ENCODE measurements at regions of chr1 and their contacts with region 1.

Region 1: DNA sequence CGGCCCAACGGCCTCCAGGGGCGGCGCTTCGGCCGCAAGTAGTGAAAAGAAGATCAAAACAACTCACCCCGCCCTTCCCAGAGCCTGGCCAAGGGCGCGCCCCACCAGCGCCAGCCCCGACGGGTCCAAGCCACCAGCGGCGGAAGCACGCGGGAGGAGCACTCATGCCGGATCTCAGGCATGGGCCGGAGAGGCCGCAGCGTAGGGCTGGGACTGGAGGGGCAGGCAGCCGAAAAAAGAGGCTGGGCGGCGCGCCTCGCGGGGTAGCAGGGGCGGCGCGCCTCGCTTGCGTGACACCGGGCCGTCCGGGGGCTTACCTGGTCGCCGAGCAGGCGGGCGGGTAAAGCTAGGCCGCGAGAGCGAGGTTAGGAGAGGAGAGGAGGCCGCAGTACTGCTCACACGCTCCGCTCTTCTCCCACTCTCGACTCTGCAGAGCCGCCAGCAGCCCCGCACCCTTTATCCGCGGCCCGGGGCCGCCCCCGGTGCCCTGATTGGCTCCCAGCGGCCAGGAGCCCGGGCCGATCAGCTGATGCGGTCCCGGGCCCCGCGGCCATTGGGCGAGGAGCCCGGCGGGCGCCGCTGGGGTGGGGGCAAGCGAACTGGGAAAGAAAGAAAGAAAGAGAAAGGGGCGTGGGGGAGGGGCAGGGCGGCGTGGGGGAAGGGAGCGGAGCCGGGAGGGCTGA is at the start of gene GLUL:
- DNase-seq: peak; percentile 82 to 85 (median 83)
- H3K4me3 ChIP-seq: peak within 1 kb of the TSS; percentile 75 to 97 (median 96)
- H3K4me3 Mint-ChIP-seq: peak within 1 kb of the TSS; percentile 100
- H3K27ac ChIP-seq: peak within 1 kb of the TSS; percentile 77 to 79
- H3K27ac Mint-ChIP-seq: peak within 1 kb of the TSS; percentile 91 to 98 (median 95)
- H3K4me1 ChIP-seq: peaks cover 48 to 57% of the 10 kb centered on the region in 2 donors
- H3K4me1 Mint-ChIP-seq: peaks cover 70% of the 10 kb centered on the region
- H3K27me3 ChIP-seq: no peaks in the 10 kb centered on the region
- H3K27me3 Mint-ChIP-seq: peaks cover 0 to 3% (median 0%) of the 10 kb centered on the region in 3 donors
- CTCF ChIP-seq: no peak
- polyA plus RNA-seq, gene GLUL: 506 to 1,423 (median 523) TPM

Region 2: DNA sequence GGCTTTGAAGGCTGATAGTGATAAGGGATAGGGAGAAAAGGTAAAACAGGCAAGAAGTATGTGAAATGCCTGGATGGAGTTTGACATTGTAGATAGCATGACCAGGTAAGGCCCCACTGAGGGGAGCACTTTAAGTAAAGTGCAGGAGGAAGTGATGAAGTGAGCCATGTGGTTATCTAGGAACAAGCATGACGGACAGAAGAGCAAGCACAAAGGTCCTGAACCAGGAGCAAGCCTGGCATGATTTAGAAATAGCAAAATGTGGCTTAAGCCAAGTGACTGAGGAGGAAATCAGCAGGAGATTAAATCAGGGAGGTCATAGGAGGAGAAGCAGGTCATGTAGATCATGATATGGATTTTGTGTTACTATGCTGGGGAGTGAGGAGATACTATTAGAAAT is 129.1 kb before region 1 on chr1:
- intact Hi-C with region 1: loop called in 1 of 2 experiments (anchors 5 kb)
- DNase-seq: no peak
- H3K4me3 ChIP-seq: no peak overlapping the region
- H3K4me3 Mint-ChIP-seq: no peak overlapping the region
- H3K27ac ChIP-seq: no peak overlapping the region
- H3K27ac Mint-ChIP-seq: no peak overlapping the region
- H3K4me1 ChIP-seq: peaks cover 29 to 32% of the 10 kb centered on the region in 2 donors
- H3K4me1 Mint-ChIP-seq: peaks cover 31% of the 10 kb centered on the region
- H3K27me3 ChIP-seq: no peaks in the 10 kb centered on the region
- H3K27me3 Mint-ChIP-seq: no peaks in the 10 kb centered on the region
- CTCF ChIP-seq: no peak

Region 3: GRCh38 chr1:182473556-182473955 is 82.1 kb after region 1 on chr1:
- intact Hi-C with region 1: no loop called
- DNase-seq: no peak
- H3K4me3 ChIP-seq: no peak overlapping the region
- H3K4me3 Mint-ChIP-seq: peak overlapping the region in 1 of 2 donors; percentile 25
- H3K27ac ChIP-seq: no peak overlapping the region
- H3K27ac Mint-ChIP-seq: no peak overlapping the region
- H3K4me1 ChIP-seq: no peaks in the 10 kb centered on the region
- H3K4me1 Mint-ChIP-seq: peaks cover 7% of the 10 kb centered on the region
- H3K27me3 ChIP-seq: no peaks in the 10 kb centered on the region
- H3K27me3 Mint-ChIP-seq: peaks cover 0 to 2% (median 0%) of the 10 kb centered on the region in 3 donors
- CTCF ChIP-seq: no peak

Region 4: GRCh38 chr1:182484591-182485257 is 93.2 kb after region 1 on chr1:
- intact Hi-C with region 1: no loop called
- DNase-seq: peak in 2 of 3 donors; percentile 36 to 48
- H3K4me3 ChIP-seq: no peak overlapping the region
- H3K4me3 Mint-ChIP-seq: no peak overlapping the region
- H3K27ac ChIP-seq: no peak overlapping the region
- H3K27ac Mint-ChIP-seq: peak overlapping the region in 2 of 7 donors; percentile 59 to 75
- H3K4me1 ChIP-seq: peaks cover 14 to 17% of the 10 kb centered on the region in 2 donors
- H3K4me1 Mint-ChIP-seq: peaks cover 21% of the 10 kb centered on the region
- H3K27me3 ChIP-seq: no peaks in the 10 kb centered on the region
- H3K27me3 Mint-ChIP-seq: peaks cover 0 to 2% (median 1%) of the 10 kb centered on the region in 3 donors
- CTCF ChIP-seq: peak; percentile 62

Region 5: DNA sequence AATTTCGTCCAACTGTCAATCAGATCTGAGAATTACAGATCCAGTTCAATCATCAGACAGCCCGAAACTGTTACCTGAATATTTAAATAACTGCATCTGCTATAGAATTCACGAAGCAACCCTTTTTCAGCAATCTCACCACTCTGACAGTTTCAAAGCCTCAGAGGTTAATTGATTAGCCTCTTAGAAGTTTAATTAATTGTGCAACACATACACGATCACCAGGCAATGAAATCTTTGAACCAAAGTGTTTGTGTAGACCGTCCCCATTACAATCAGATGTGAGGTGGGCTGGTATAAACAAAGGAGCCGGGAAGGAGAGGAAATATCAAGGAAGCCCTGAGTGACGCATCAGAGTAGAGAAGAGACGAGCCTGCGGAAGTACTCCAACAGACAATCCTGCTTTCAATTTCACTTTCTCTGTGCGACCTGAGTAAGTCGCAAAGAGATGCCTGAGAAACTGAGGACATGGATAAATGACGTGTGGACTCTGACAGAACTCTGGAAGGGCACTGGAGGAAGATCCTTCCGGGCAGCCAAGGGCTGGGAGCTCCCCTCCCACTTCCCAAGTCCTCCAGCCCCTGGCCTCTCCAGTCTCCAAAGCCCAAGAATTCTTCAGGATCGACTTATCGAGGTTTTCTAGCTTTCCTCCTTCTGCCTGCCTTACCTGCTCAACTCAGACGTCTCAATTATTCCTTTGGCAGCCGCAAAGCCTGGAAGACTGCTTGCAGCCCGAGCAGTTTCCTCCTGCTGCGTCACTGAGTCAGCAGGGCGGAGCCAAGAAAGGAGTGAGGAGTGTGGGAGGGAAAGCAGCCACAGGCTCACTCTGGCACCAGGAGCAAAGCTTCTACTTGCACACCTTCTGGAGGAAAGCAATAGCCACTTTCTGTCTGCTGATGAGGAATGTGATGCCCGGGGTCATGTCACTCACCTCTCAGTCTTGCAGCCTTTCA is 197.3 kb after region 1 on chr1 and contains the start of gene RNASEL:
- intact Hi-C with region 1: loop called in 1 of 2 experiments (anchors 10 kb)
- DNase-seq: peak; percentile 64 to 84 (median 81)
- H3K4me3 ChIP-seq: peak within 1 kb of the TSS; percentile 83 to 100 (median 86)
- H3K4me3 Mint-ChIP-seq: peak within 1 kb of the TSS; percentile 97 to 100
- H3K27ac ChIP-seq: peak within 1 kb of the TSS; percentile 86 to 98
- H3K27ac Mint-ChIP-seq: peak within 1 kb of the TSS; percentile 98 to 100 (median 99)
- H3K4me1 ChIP-seq: peaks cover 35 to 57% of the 10 kb centered on the region in 2 donors
- H3K4me1 Mint-ChIP-seq: peaks cover 50% of the 10 kb centered on the region
- H3K27me3 ChIP-seq: no peaks in the 10 kb centered on the region
- H3K27me3 Mint-ChIP-seq: peaks cover 0 to 3% (median 3%) of the 10 kb centered on the region in 3 donors
- CTCF ChIP-seq: no peak
- polyA plus RNA-seq, gene RNASEL: 6.9 to 12.3 (median 7.9) TPM

Measured in CD14-positive monocyte (primary cell).